ENCODE measurements at regions of chrX and their contacts with region 1.

Region 1: DNA sequence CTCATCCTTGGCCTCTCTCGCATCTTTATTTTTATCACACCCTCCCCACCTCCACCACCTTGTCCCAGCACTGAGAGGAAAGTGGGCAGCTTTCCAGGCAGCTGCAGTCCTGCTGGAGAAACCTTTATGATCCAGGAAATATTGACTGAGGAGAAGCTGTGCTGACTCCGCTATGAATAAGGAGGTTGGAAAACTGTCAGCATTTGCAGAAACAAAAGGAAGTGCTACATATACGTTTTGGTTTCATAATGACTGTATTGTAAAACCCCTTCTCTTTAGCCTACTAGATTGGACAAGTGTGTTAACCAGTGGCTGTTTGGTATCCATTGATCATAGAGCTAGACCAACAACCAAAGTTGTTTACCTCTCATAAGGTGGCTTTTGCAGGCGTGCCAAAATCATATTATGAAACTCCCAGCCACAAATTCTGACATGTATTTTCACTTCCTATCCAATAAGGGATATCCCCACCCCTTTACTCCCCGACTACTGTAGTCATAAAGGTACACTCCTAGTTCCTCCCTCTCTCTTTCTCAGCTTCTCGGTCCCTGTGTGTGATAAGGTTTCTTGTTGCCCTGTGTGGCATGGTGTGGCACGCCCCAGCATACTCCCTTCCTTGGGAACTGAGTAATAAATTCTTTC is 88.4 kb downstream of the GPR143 start:
- DNase-seq: peak; percentile 43
- H3K4me3 Mint-ChIP-seq: no peak overlapping the region
- H3K27ac Mint-ChIP-seq: peak overlapping the region; percentile 14
- H3K4me1 Mint-ChIP-seq: peaks cover 20% of the 10 kb centered on the region
- H3K27me3 Mint-ChIP-seq: no peaks in the 10 kb centered on the region

Region 2: DNA sequence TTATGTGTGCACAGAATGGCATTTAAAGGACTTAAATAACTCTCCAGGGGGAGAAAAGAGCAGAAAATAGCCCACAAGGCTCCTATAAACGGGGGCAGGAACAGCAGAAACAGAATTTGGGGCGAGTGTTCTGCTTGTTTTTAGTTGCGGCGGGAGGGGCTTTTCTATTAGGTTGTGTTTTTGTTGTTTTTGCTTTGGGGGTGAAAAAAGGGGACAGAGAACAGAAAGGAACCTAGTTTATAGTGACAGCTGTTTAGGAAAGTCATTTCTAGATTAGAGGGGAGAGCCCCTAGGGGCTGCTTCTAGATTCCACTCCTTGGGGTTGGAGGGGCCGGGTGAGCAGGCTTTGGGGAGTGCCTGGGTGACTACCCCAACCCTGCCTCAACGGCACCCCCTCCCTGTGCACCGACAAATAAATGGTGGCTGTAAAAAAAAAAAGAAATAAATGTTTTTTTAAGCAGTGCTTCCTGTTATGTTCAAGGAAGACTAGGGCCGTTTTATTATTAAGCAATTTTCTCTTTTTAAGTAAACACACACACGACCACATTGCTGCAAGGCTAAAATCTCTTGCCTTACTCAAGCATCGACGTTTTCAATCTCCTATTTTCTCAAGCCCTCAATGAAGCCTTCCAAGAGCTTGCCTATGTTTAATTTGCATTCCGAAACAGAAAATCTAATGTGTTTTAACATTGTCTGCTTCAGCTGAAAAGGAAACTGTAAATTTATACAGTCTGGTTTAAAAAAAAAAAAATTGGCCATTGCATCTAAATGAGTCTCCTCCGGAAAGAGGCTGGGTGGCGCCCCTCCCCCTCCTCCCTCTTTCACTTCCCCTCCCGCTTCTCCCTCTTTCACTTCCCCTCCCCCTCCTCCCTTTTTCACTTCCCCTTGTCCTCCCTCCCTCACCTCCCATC is 335.7 kb before region 1 on chrX:
- CTCF ChIA-PET with region 1: no interaction called
- POLR2A ChIA-PET with region 1: no interaction called
- intact Hi-C with region 1: loop called (anchors 1 kb)
- DNase-seq: peak; percentile 76
- H3K4me3 Mint-ChIP-seq: peak overlapping the region; percentile 30
- H3K27ac Mint-ChIP-seq: peak overlapping the region; percentile 84
- H3K4me1 Mint-ChIP-seq: peaks cover 30% of the 10 kb centered on the region
- H3K27me3 Mint-ChIP-seq: no peaks in the 10 kb centered on the region

Region 3: GRCh38 chrX:9622128-9622527 is 55.1 kb before region 1 on chrX:
- CTCF ChIA-PET with region 1: no interaction called
- POLR2A ChIA-PET with region 1: no interaction called
- intact Hi-C with region 1: loop called (anchors 1 kb)
- DNase-seq: peak; percentile 50
- H3K4me3 Mint-ChIP-seq: no peak overlapping the region
- H3K27ac Mint-ChIP-seq: no peak overlapping the region
- H3K4me1 Mint-ChIP-seq: peaks cover 40% of the 10 kb centered on the region
- H3K27me3 Mint-ChIP-seq: no peaks in the 10 kb centered on the region

Region 4: DNA sequence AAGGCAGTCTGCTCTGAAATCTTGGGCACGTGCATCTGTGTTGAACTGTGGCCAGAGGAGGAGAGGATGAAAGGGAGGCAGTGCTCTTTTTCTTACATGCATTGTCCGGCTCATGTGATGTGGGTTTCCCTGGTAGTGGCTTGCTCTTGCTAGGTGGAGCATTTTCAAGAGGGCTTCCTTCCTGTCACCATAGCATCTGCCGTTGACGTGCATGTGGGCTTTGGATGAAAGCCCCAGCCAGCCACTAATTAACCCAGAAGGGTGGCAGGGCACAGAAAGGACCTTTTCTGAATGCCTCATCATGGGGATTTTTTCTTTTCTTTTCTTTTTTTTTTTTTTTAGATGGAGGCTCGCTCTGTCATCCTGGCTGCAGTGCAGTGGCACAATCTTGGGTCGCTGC is 32.9 kb before region 1 on chrX:
- CTCF ChIA-PET with region 1: no interaction called
- POLR2A ChIA-PET with region 1: no interaction called
- intact Hi-C with region 1: loop called (anchors 1 kb)
- DNase-seq: peak; percentile 67
- H3K4me3 Mint-ChIP-seq: no peak overlapping the region
- H3K27ac Mint-ChIP-seq: no peak overlapping the region
- H3K4me1 Mint-ChIP-seq: peaks cover 23% of the 10 kb centered on the region
- H3K27me3 Mint-ChIP-seq: no peaks in the 10 kb centered on the region

Region 5: DNA sequence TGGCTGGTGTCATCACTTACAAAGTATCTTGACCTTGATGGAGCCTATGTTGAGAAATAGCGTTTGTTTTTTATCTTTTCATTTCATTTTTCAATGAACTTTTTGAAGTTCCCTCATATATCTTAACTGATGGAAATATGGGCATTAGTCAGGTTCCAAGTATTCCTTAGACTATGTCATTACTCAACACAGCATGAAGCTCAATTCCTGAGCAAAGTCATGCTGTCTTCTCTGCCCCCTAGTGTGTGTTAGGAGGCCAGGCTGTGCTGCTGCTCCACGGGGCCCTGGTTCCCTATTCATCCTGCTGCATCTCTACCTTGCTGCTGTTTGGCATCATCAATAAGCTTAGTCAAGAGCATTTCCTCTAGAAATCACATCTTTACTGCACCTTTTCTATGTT is 47.5 kb after region 1 on chrX:
- CTCF ChIA-PET with region 1: no interaction called
- POLR2A ChIA-PET with region 1: no interaction called
- intact Hi-C with region 1: no loop called
- DNase-seq: no peak
- H3K4me3 Mint-ChIP-seq: no peak overlapping the region
- H3K27ac Mint-ChIP-seq: no peak overlapping the region
- H3K4me1 Mint-ChIP-seq: no peaks in the 10 kb centered on the region
- H3K27me3 Mint-ChIP-seq: peaks cover 2% of the 10 kb centered on the region